PC-3 (cell line): ENCODE measurements at regions of chr7 and their contacts with region 1.

Region 1: GRCh38 chr7:93188870-93189634 is 37.2 kb downstream of the HEPACAM2 start:
- DNase-seq: no peak
- ATAC-seq: no peak
- H3K4me3 ChIP-seq: no peak overlapping the region
- H3K27ac ChIP-seq: no peak overlapping the region
- H3K4me1 ChIP-seq: peaks cover 15% of the 10 kb centered on the region
- H3K27me3 ChIP-seq: no peaks in the 10 kb centered on the region
- CTCF ChIP-seq: no peak

Region 2: GRCh38 chr7:93203487-93203886 is 14.4 kb after region 1 on chr7:
- CTCF ChIA-PET with region 1: interaction called, 3 read pairs
- POLR2A ChIA-PET with region 1: no interaction called
- intact Hi-C with region 1: loop called (anchors 1 kb)
- DNase-seq: peak; percentile 41
- ATAC-seq: peak; percentile 87
- H3K4me3 ChIP-seq: no peak overlapping the region
- H3K27ac ChIP-seq: peak overlapping the region; percentile 8; the same call in 1 of the 2 replicates
- H3K4me1 ChIP-seq: peaks cover 18% of the 10 kb centered on the region
- H3K27me3 ChIP-seq: no peaks in the 10 kb centered on the region
- CTCF ChIP-seq: no peak

Region 3: GRCh38 chr7:93226310-93226709 is 37.3 kb after region 1 on chr7 and contains the start of gene HEPACAM2:
- CTCF ChIA-PET with region 1: no interaction called
- POLR2A ChIA-PET with region 1: no interaction called
- intact Hi-C with region 1: loop called (anchors 2 kb)
- DNase-seq: no peak
- ATAC-seq: no peak
- H3K4me3 ChIP-seq: no peak within 1 kb of the TSS
- H3K27ac ChIP-seq: no peak within 1 kb of the TSS
- H3K4me1 ChIP-seq: peaks cover 14% of the 10 kb centered on the region; the same call in 1 of the 2 replicates
- H3K27me3 ChIP-seq: no peaks in the 10 kb centered on the region
- CTCF ChIP-seq: no peak
- total RNA-seq, gene HEPACAM2: not detected in 2 replicates